Tibial artery (tissue), 4 donors: ENCODE measurements at regions of chr17 and their contacts with region 1.

Region 1: DNA sequence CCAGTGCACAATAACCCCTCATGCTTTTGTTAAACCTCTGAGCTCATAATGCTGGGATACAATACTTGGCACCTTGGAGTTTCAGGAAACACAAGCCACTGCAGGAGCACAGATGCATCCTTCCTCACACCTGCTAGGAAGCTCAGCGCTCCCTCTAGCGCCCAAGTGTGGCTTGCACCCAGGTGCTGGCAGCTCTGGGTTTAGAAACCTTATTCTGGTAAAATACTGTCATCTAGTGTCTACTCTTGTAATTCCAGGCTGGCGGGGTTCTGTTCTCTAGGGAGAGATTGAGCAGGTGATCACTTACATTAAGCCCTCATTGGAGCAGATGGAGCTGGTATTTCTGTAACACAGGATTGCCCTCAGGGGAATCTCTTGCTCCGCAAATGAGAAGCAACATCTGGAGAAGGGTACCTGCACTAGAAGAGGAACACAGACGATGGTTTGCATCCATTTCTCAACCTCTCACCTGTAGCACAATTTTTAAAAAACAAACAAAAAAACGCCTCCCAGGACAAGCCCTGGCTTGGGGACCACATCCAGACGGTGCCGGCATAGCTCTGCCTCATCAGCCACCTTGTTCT is 1.5 kb downstream of the CCL1 start:
- DNase-seq: peak; percentile 90 to 93
- H3K4me3 ChIP-seq: no peak overlapping the region
- H3K27ac ChIP-seq: no peak overlapping the region
- H3K4me1 ChIP-seq: peaks cover 0 to 4% (median 0%) of the 10 kb centered on the region in 4 donors
- H3K27me3 ChIP-seq: peaks cover 0 to 16% of the 10 kb centered on the region in 2 donors
- CTCF ChIP-seq: peak; percentile 100

Region 2: GRCh38 chr17:34300652-34301370 is 60.8 kb before region 1 on chr17:
- intact Hi-C with region 1: loop called (anchors 5 kb)
- DNase-seq: no peak
- H3K4me3 ChIP-seq: no peak overlapping the region
- H3K27ac ChIP-seq: no peak overlapping the region
- H3K4me1 ChIP-seq: peaks cover 0 to 25% (median 5%) of the 10 kb centered on the region in 4 donors
- H3K27me3 ChIP-seq: no peaks in the 10 kb centered on the region
- CTCF ChIP-seq: no peak